ENCODE measurements at regions of chr2 and their contacts with region 1.

Region 1: GRCh38 chr2:162914161-162914560 is 75.6 kb upstream of the KCNH7 start:
- DNase-seq: no peak

Region 2: GRCh38 chr2:164178835-164179465 is 1264.8 kb after region 1 on chr2:
- intact Hi-C with region 1: loop called in 1 of 2 experiments (anchors 5 kb)
- DNase-seq: no peak